HEK293 (cell line): ENCODE measurements at regions of chr12 and their contacts with region 1.

Region 1: GRCh38 chr12:389139-390096 is at the start of gene KDM5A:
- H3K4me3 ChIP-seq: peak within 1 kb of the TSS; percentile 89
- H3K27ac ChIP-seq: peak within 1 kb of the TSS; percentile 92
- H3K4me1 ChIP-seq: peaks cover 9% of the 10 kb centered on the region
- CTCF ChIP-seq: 0 out of 2 replicates have a peak, but pooled peaks have one; percentile 37

Region 2: DNA sequence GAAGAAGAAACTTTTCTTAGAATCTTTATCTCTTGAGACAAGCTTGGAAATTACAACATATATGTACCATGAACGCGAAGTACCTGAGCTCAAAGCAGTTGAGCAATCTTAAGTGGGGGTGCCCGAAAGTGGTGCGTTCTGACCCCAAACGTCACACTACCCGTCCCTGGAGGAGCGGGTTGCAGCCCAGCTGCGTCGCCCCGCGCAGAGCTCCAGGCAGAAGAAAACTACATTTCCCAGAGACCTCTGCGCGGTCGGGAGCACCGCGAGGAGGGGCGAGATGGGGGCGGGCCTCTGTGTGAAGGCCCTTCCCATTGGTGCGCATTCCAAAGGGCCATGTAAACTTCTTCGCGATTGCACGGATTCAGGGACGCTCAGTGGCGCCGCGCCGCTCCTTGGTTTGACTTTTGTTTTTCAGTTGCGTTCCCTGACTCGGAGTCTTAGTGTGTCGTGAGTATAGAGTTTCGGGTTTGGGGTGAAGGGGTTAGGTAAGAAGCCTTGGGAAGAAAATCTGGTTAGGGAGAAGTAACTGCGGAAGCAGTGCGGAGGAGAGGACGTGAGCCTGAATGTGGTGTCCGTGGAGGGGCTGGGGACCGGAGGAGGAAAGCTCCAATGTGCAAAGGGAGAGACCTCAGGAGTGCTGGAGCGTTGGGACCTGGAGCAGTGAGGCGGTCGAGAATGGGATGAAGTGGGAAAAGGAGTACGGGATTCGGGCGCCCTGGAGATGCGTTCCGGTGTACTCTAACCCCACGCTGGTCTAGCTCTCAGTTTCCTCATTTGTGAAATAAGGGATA is 12.0 kb after region 1 on chr12 and contains the start of gene CCDC77:
- CTCF ChIA-PET with region 1: interaction called, 10 read pairs
- POLR2A ChIA-PET with region 1: interaction called, 36 read pairs
- H3K4me3 ChIP-seq: peak within 1 kb of the TSS; percentile 59
- H3K27ac ChIP-seq: peak within 1 kb of the TSS; percentile 28
- H3K4me1 ChIP-seq: no peaks in the 10 kb centered on the region; the same call in 1 of the 2 replicates
- CTCF ChIP-seq: peak; percentile 89